Cardiac septum (tissue), 1 donor: ENCODE measurements at regions of chr19 and their contacts with region 1.

Region 1: DNA sequence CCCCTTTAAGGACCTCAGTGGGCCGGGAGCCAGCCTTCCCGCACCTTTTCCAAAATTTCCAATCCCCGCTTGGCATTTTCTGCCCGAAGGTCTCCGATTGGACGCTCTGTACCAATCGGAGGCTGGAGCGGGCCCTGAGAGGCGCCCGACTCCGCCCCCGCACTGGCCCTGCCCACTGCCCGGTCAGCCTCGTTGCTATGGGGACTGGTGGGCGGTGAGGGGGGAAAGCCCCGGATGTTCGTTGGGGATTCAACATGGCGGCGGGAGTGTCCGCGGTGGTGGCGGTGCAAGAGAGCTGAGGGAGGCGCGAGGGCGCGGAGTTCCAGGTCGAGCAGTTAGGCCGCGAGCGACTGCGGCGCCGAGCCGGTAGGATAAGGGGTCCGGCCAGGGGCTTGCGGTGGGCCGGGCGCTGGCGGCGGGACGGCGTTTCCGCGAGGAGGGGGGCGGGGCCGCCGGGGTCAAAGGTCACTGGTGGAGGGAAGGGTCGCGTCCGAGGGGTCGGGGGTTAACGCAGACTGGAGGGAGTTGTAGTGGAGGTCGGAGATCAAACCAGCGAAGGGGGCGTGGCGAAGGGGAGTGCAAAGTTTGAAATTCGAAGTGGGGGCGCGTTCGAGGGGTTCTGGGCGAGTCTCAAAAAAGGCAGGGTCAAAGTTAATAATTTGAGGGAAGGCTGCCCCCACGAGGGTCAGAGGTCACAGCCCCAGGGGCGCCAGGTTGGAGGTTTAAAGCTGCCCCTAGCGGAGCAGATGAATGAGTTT is at the start of gene PAK4:
- DNase-seq: peak; percentile 98
- total RNA-seq, gene PAK4: 18.6 TPM

Region 2: DNA sequence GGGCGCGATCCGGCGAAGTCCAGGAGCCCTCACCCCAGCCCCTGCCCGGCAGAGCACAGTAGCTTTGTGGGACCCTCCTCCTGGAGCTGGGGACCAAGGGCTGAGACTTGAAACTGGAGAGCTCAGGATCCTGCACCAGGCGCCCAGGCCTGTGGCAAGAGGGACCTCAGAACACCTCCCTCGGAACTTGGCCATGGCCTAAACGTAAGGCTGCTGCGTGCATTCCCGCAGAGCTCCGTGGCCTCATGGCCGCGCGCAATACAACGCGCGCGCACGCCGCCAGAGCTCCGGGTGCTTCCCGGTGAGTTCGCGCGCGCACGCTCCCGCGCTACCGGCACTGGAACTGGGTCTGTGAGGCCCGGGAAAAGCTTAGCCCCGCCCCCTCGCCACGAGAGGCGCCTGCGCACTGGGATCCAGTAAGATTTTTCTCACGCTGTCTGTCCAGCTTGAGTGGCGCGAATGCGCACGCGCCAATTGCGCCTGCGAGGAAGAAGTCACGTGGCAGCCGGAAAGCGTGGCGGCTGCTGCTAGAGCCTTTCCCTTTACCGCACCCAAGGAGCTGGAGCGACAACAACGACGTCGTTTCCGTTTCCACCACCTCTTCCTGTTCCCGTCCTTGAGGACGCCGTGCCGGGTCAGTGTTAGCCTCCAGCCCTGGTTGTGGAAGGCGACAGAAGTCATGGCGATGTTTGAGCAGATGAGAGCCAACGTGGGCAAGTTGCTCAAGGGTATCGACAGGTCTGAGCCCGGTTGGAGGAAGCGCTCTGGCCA is 507.0 kb before region 1 on chr19 and contains the start of gene EIF3K:
- intact Hi-C with region 1: loop called (anchors 5 kb)
- DNase-seq: peak; percentile 99
- total RNA-seq, gene EIF3K: 483 TPM

Region 3: DNA sequence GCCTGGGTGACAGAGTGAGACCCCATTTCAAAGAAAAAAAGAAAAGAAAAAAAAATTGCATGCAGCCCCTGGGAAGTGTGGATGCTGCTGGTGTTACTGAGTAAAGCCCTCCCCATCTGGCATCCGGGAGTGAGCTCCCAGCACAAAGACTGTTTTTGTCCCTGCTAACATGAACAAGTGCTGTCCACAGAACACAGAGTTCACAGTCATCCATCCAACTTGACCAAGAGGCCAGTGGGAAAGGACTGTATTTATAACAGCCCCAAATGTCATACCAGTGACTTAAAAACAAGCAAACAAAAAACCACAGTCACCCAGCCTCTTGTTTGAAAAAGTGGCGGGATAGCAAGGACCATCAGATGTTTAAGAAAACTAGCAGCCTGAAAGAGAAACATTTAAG is 161.0 kb before region 1 on chr19:
- intact Hi-C with region 1: loop called (anchors 10 kb)
- DNase-seq: no peak

Region 4: DNA sequence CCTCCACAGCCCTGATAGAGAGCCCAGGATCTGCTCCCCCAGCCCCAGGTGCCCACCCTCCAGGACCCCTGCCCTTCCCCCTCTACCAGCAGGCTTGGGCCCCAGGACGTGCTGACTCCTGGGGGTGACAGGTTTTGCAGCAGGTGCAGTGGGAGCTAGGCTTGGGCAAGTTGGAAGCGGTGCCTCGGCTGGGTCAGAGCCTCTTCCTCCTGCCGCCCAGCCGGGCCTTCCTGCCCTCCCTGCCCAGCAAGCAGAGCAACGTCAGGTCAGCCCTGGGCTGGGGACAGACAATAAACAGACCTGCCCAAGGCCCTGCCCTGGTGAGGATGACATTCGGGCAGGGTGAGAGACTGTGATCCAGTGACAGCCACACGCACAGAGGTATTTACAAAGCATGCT is 61.8 kb after region 1 on chr19:
- intact Hi-C with region 1: loop called (anchors 2 kb)
- DNase-seq: no peak

Region 5: GRCh38 chr19:39328046-39328705 is 202.4 kb after region 1 on chr19:
- intact Hi-C with region 1: loop called (anchors 1 kb)
- DNase-seq: peak; percentile 92

Region 6: DNA sequence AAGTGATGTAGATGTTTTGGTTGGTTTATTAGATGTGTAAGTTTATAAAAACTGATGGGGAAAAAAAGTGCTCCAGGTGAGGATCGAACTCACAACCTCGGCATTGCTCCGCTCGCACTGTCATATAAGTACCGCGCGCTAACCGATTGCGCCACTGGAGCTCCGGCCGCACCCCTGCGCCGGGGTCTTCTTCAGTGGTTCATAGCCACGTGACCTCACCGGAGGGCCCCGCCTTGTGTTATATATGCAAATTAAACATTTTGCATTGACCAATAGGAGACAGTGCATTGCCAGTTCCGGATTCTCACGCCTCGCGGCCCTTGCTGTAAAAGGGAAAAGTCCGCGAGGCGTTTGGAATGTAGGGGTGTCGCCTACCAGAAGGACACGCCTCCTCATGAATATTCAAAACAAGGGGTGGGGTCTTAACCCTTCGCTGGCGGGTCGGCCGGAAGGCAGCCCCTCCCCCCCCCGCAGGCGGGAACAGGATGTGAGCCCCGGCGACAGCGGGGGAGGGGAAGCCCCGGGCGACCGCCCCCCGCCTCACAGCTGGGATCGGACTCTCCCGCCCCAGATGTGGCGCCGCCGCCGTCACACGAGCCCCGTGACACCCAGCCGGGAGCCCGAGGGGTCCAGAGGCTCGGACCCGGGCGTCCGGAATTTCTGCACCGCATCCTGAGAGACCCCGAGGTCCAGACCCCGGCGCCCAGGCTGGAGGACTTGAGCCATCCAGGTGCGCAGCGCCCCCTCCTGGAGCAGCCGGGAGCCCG is 286.6 kb after region 1 on chr19 and contains the start of gene PLEKHG2:
- intact Hi-C with region 1: loop called (anchors 10 kb)
- DNase-seq: peak; percentile 97
- total RNA-seq, gene PLEKHG2: 25.1 TPM

Region 7: DNA sequence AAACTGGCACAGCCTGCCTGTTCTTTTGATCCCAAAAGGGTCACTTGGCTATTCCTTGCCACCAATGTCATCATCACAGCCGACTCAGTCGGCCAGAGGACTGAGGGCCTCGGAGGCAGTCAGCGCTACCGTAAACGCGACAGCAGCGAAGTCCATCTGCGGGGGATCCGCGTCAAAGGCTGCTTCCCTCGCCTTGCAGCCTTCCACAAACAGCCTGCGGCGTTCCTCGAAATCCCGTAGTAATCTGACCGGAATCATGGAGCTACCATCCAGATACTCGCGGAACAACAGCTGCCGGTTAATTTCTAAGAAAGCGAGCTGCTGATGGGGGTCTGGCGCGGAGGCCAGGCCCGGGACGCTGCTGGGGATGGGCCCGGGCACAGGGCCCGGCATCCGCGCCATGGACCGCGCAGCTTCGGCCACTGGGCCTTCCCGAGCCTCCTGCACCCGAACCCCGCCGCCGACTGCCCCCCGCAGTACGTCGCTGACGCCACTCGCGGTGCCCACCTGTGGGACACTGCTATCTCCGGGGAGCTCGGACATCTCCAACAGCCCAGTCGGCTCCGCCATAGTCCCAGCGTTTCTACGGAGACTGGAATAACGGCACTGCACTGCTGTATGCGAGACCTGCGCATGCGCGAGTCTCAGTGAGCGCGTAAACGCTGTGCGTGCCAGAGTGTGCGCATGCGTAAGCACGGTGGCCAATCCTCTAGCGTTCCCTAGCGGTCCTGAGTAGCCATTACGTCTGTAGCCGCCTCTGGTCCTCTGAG is 406.7 kb after region 1 on chr19 and contains the start of gene EID2B:
- intact Hi-C with region 1: loop called (anchors 10 kb)
- DNase-seq: peak; percentile 98
- total RNA-seq, gene EID2B: 2.8 TPM